Transverse colon (tissue), 4 donors: ENCODE measurements at regions of chr4 and their contacts with region 1.

Region 1: DNA sequence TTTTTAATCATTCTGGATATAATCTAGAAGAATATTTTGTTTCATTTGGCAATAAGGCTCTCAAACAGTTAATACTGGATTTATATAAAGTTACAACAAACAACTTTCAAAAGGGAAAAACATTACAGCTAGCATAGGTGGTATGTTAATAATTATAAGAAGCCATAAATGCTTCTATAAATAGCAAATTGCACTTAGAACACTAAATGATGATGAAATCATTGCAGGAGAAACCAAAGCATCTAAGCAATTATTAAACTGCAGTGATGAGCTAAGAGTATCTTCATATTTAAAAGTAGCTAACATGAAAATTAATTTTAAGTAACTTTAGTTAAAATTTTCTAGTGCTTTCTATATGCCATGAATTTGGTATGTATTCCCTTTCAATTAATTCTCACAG is 189.5 kb downstream of the CENPC start:
- DNase-seq: no peak
- H3K4me3 ChIP-seq: no peak overlapping the region
- H3K27ac ChIP-seq: no peak overlapping the region
- H3K4me1 ChIP-seq: no peaks in the 10 kb centered on the region
- H3K27me3 ChIP-seq: no peaks in the 10 kb centered on the region
- CTCF ChIP-seq: no peak
- EP300 ChIP-seq: no peak
- POLR2A ChIP-seq: no peak

Region 2: DNA sequence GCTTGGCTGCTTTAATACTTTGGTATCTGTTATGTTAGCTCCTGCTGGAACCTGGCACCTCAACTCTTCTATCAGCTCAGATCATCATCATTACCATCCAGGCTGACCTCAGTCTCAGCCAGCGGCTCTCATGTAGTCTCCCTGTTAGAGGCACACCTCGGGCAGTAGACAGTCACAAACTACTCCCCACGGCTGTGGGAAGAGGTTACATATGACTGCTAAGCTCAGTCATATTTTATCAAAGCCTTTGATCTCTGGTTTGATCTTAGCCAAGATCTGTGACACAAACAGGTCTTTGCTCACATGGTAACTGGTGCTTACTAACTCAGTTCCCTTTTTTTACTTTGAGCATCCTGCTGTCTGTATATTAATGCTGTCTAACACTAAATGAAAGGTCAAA is 195.4 kb before region 1 on chr4:
- in situ Hi-C with region 1: no loop called
- intact Hi-C with region 1: no loop called
- DNase-seq: no peak
- H3K4me3 ChIP-seq: no peak overlapping the region
- H3K27ac ChIP-seq: no peak overlapping the region
- H3K4me1 ChIP-seq: no peaks in the 10 kb centered on the region
- H3K27me3 ChIP-seq: no peaks in the 10 kb centered on the region
- CTCF ChIP-seq: no peak
- EP300 ChIP-seq: no peak
- POLR2A ChIP-seq: no peak

Region 3: GRCh38 chr4:67727124-67727850 is 371.5 kb after region 1 on chr4:
- in situ Hi-C with region 1: no loop called
- intact Hi-C with region 1: loop called (anchors 5 kb)
- DNase-seq: no peak
- H3K4me3 ChIP-seq: no peak overlapping the region
- H3K27ac ChIP-seq: no peak overlapping the region
- H3K4me1 ChIP-seq: no peaks in the 10 kb centered on the region
- H3K27me3 ChIP-seq: no peaks in the 10 kb centered on the region
- CTCF ChIP-seq: no peak
- EP300 ChIP-seq: no peak
- POLR2A ChIP-seq: no peak